Cardiac septum (tissue), 1 donor: ENCODE measurements at regions of chr5 and their contacts with region 1.

Region 1: GRCh38 chr5:58452566-58453258 is 7.2 kb downstream of the PLK2 start:
- DNase-seq: no peak

Region 2: DNA sequence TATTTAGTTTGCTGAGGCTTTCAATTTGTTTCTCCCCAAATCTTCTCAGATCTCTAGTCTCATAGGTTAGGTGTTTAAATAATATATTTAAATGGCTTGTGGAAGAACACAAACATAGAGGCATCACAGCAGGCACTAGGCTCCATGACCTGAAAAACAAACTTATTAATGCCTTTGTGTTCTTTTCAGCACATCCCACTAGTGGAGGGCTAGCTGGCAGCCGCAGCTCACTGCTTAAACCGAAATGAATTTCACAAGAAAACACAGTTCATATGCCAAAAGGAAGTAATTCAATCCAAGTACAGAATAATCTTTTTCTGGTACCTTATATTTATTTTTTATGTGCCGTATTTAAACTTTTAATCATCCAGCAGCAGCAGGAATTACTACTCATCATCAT is 375.3 kb before region 1 on chr5:
- intact Hi-C with region 1: loop called (anchors 2 kb)
- DNase-seq: no peak

Region 3: GRCh38 chr5:58318468-58318867 is 134.2 kb before region 1 on chr5:
- intact Hi-C with region 1: loop called (anchors 5 kb)
- DNase-seq: no peak

Region 4: DNA sequence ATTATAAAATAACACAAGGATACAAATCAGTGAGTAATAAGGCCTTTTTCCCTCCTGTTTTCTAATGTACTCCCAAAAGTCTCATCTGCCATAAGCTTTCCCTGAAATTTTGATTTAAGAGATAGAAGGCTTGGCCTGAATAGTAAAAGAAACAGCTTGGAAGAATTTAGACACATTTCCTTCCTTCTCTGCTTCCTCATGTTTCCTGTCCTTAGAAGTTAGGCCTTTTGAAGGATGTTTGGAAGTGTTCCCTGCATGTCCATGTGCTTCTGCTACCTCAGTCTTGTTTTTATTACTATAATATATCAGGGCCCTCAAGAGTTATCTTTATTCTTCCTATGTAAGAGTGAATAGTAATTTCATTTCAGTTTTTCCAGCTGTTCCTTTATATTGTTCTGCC is 2004.5 kb after region 1 on chr5:
- intact Hi-C with region 1: no loop called
- DNase-seq: no peak